A549 (cell line): ENCODE measurements at regions of chr1 and their contacts with region 1.

Region 1: GRCh38 chr1:162056043-162056442 is 13.4 kb upstream of the NOS1AP start:
- DNase-seq: peak; percentile 64 to 72
- ATAC-seq: peak; percentile 88 to 96
- H3K4me3 ChIP-seq: no peak overlapping the region
- H3K27ac ChIP-seq: no peak overlapping the region
- H3K4me1 ChIP-seq: peaks cover 13% of the 10 kb centered on the region
- CTCF ChIP-seq: peak; percentile 86
- EP300 ChIP-seq: no peak
- POLR2A ChIP-seq: no peak
- RAD21 ChIP-seq: peak; percentile 96 to 97

Region 2: DNA sequence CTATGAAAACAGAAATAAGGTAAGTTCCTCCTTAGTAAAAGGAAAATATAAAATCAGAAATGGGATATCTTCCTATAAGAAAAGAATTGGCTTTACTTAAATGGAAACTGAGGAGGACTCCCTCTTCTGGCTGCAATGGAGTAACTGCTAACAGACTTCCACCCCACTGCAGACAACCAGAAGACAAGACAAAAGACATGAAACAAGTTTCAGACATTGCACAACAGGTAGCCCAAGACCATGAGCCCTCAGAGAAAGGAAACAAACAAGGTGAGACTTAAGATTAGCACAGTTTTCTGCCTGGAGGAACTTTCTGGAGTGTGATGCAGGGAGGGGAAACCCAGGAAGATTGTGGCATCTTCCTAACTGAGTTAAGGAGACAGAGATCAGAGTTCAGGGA is 15.4 kb before region 1 on chr1:
- CTCF ChIA-PET with region 1: interaction called, 13 read pairs
- POLR2A ChIA-PET with region 1: no interaction called
- DNase-seq: peak in 1 of 2 experiments; percentile 44
- ATAC-seq: peak in 1 of 2 experiments; percentile 64; a peak in 3 of 6 replicates
- H3K4me3 ChIP-seq: no peak overlapping the region
- H3K27ac ChIP-seq: no peak overlapping the region
- H3K4me1 ChIP-seq: no peaks in the 10 kb centered on the region
- CTCF ChIP-seq: peak; percentile 28
- EP300 ChIP-seq: no peak
- POLR2A ChIP-seq: no peak
- RAD21 ChIP-seq: peak in 1 of 2 experiments; percentile 33; a peak in 1 of 5 replicates

Region 3: GRCh38 chr1:162270016-162270770 is 214.2 kb after region 1 on chr1:
- CTCF ChIA-PET with region 1: interaction called, 21 read pairs
- POLR2A ChIA-PET with region 1: no interaction called
- DNase-seq: no peak
- ATAC-seq: no peak
- H3K4me3 ChIP-seq: no peak overlapping the region
- H3K27ac ChIP-seq: no peak overlapping the region
- H3K4me1 ChIP-seq: no peaks in the 10 kb centered on the region
- CTCF ChIP-seq: no peak
- EP300 ChIP-seq: no peak
- POLR2A ChIP-seq: no peak
- RAD21 ChIP-seq: no peak

Region 4: GRCh38 chr1:162381383-162381782 is 325.3 kb after region 1 on chr1 and contains the start of gene C1orf226:
- CTCF ChIA-PET with region 1: interaction called, 10 read pairs
- POLR2A ChIA-PET with region 1: no interaction called
- DNase-seq: peak; percentile 17 to 71
- ATAC-seq: peak in 1 of 2 experiments; percentile 40; a peak in 3 of 6 replicates
- H3K4me3 ChIP-seq: no peak within 1 kb of the TSS
- H3K27ac ChIP-seq: peak within 1 kb of the TSS; percentile 51 to 70; a peak in 5 of 6 replicates
- H3K4me1 ChIP-seq: peaks cover 20% of the 10 kb centered on the region
- CTCF ChIP-seq: no peak
- EP300 ChIP-seq: no peak
- POLR2A ChIP-seq: no peak
- RAD21 ChIP-seq: no peak
- polyA plus RNA-seq, gene C1orf226: 0.37 and 0.56 TPM in 2 replicates